Activated naive CD4-positive, alpha-beta T cell treated with anti-CD3 and anti-CD28 coated beads for 36 hours (primary cell): ENCODE measurements at regions of chr16 and their contacts with region 1.

Region 1: DNA sequence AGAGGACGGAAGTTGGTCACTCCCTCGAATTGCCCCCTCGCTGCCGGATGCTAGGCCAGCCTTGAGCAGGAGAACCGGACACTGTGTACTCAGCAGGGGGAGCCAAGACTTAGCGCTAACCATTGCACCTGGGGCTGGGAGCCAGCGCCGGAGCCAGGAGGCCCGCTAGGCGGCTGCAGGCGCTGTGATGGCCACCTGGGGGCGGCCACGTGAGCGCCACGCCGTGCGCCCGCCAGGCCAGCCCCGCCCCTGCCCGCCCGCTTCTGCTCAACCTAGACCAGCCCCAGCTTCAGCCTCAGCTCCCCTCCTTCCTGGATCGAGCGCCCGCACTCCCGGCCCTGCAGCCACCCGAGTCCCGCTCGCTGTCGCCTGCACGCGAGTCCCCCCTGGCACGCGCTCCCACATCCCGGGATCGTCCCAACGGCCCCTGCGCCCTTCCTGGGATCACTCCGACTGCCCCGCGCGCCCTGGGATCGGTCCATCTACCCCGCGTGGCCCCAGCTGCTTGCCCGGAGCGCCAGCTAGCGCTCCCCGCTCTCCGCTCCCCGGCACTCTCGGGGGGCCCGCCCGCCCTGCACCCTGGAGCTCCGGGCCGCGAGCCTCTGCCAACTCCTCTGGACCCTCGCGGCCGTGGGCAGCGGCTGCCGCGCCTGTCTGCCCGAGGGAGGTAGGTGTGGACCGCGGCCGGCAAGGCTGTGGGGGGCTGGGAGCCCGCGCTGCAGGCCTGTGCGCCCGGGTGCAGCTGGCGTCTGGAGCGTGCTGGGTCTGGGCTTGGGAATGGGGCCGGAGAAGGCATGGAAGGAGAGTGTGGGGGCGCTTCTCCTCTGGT is at the start of gene EEF2K:
- DNase-seq: peak; percentile 88
- H3K4me3 Mint-ChIP-seq: peak within 1 kb of the TSS; percentile 94
- H3K27ac Mint-ChIP-seq: peak within 1 kb of the TSS; percentile 88
- H3K4me1 Mint-ChIP-seq: peaks cover 41% of the 10 kb centered on the region
- H3K27me3 Mint-ChIP-seq: no peaks in the 10 kb centered on the region
- total RNA-seq, gene EEF2K: 9.8 to 10.0 TPM

Region 2: GRCh38 chr16:22232277-22233042 is 26.2 kb after region 1 on chr16:
- CTCF ChIA-PET with region 1: no interaction called
- intact Hi-C with region 1: loop called (anchors 1 kb)
- DNase-seq: peak; percentile 66
- H3K4me3 Mint-ChIP-seq: no peak overlapping the region
- H3K27ac Mint-ChIP-seq: no peak overlapping the region
- H3K4me1 Mint-ChIP-seq: peaks cover 8% of the 10 kb centered on the region
- H3K27me3 Mint-ChIP-seq: no peaks in the 10 kb centered on the region

Region 3: DNA sequence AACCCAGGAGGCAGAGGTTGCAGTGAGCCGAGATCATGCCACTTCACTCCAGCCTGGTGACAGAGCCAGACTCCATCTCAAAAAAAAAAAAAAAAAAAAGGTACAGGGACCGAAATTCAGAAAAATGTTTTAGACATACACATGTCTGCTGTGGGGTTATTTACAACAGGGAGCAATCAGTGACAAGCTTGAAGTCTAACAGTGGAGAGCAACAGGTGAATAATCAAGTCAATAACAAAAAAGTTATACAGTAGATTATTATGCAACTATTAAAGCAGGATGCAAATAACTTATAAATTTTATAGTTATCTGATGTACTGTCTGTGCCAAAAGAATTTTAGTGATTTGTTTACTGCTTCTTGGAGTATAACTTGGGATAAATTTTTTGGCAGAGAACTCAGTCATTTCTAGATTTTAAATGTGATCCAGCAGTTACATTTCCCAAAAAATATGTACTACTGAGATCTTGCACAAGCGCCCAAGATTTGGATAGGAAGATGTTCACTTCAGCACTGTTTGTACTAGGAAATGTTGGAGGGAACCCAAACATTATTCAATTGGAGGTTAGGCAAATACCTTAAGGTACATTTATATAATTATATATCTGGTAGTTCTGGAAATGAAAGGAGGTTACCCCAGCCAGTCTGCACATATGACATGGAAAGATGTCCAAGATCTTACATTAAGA is 33.9 kb after region 1 on chr16:
- CTCF ChIA-PET with region 1: interaction called, 3 read pairs
- intact Hi-C with region 1: loop called (anchors 1 kb)
- DNase-seq: no peak
- H3K4me3 Mint-ChIP-seq: no peak overlapping the region
- H3K27ac Mint-ChIP-seq: peak overlapping the region; percentile 36
- H3K4me1 Mint-ChIP-seq: peaks cover 28% of the 10 kb centered on the region
- H3K27me3 Mint-ChIP-seq: no peaks in the 10 kb centered on the region